ENCODE measurements at regions of chr6 and their contacts with region 1.

Region 1: DNA sequence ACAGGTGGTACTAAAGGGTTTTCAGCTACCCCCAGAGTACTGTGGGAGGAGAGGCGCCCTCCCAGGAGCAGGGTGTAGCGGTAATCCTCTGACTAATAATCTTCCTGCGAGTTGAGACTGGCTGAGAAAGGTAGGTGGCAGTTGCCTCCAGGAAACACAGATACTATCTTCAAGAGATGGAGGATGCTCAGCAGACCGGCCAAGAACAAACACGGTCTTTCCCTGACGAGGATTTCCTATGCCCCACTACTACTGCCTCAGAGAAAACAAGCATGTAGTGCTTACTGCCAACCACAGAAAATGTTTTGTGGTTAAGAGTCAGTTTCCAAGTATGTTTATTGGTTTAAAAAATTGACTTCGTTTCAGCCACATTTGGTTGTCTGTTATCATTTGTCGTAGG is 26.8 kb downstream of the C6orf89 start:
- DNase-seq: peak; percentile 74
- ATAC-seq: peak; percentile 87
- H3K4me3 Mint-ChIP-seq: peak overlapping the region; percentile 37
- H3K27ac Mint-ChIP-seq: peak overlapping the region; percentile 83
- H3K4me1 Mint-ChIP-seq: peaks cover 44% of the 10 kb centered on the region
- H3K27me3 Mint-ChIP-seq: no peaks in the 10 kb centered on the region

Region 2: DNA sequence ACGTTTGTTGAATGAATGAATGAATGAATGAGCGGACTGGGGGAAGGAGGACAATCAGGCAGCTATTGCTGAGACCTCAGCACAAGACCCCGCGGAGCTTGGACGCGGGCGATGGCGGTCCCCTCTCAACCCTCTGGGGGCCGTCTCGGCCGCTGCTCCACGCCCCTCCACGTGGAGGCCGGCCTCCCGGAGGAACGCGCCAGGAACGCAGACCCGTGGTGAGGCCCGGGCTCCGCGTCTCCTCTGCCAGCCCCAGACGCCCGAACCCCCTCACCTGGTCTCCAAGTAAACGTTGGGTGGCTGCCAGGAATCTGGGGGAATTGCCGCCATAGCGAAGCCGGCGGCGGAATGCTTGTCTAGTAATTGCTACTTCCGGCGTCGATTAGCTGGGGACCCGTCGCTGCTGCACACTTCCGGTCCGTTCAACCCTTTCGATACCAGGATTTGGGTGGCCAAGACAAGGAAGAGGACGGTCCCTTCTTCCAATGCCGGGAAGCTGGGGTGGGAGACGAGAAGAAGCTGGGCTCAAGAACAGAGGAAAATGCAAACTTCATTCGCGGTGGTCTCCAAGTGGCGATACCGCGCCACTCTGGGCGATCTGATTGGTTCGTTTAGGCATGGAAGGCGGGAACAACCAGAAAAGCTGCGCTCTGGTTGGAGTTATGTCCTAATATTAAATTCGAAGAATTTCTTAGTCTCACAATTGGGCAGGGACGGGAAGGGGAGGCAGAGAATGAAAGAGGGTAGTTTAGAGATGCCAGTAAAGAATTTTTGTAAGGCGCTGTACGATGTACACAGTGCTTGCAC is 37.9 kb before region 1 on chr6 and contains the start of gene PPIL1:
- CTCF ChIA-PET with region 1: no interaction called
- POLR2A ChIA-PET with region 1: no interaction called
- intact Hi-C with region 1: loop called (anchors 1 to 5 kb)
- DNase-seq: peak; percentile 90
- ATAC-seq: peak; percentile 80
- H3K4me3 Mint-ChIP-seq: peak within 1 kb of the TSS; percentile 98
- H3K27ac Mint-ChIP-seq: peak within 1 kb of the TSS; percentile 99
- H3K4me1 Mint-ChIP-seq: peaks cover 45% of the 10 kb centered on the region
- H3K27me3 Mint-ChIP-seq: peaks cover 7% of the 10 kb centered on the region
- total RNA-seq, gene PPIL1: 45.9 to 46.0 TPM

Region 3: DNA sequence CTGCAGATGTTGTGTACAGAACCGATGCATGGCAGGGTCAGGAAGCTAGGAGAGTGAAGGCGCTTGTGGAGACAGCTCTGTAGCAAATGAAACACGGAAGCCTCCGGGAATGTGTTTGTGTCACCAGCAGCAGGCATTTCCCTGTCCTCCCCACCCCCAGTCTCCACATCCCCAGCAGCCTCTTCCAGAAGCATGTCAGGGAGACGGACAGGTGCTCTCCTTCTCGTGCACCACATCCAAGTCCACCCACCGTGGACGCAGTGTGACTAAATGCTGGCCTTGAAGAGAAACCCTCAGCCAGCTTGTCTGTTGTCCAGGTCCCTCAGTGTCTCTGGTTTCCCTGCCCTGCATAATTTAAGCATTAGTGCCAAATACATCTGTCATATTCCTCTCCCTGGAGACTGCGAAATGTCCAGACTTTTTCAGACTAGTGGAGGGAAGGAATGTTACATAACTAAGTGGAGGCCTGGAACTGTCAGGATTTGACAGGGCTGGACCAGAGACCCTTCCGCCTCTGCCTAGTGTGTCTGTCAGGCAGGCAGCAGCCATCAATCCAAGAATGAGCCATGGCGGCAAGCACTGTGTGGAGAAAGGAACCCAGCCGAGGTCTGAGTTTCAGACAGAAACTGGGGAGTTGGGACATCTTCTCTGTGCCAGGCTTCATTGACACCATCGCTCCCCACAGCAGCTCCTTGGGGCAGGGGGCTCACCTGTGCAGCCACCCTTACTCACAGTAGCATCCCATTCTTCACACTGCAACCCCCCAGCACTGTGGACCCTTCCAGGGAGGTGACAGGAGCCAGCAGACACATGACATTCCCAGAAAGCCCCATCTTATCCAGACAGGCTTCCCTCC is 15.3 kb after region 1 on chr6:
- CTCF ChIA-PET with region 1: interaction called, 5 read pairs
- POLR2A ChIA-PET with region 1: no interaction called
- intact Hi-C with region 1: loop called in 1 of 2 experiments (anchors 1 kb)
- DNase-seq: no peak
- ATAC-seq: no peak
- H3K4me3 Mint-ChIP-seq: no peak overlapping the region
- H3K27ac Mint-ChIP-seq: no peak overlapping the region
- H3K4me1 Mint-ChIP-seq: peaks cover 22% of the 10 kb centered on the region
- H3K27me3 Mint-ChIP-seq: no peaks in the 10 kb centered on the region

Region 4: DNA sequence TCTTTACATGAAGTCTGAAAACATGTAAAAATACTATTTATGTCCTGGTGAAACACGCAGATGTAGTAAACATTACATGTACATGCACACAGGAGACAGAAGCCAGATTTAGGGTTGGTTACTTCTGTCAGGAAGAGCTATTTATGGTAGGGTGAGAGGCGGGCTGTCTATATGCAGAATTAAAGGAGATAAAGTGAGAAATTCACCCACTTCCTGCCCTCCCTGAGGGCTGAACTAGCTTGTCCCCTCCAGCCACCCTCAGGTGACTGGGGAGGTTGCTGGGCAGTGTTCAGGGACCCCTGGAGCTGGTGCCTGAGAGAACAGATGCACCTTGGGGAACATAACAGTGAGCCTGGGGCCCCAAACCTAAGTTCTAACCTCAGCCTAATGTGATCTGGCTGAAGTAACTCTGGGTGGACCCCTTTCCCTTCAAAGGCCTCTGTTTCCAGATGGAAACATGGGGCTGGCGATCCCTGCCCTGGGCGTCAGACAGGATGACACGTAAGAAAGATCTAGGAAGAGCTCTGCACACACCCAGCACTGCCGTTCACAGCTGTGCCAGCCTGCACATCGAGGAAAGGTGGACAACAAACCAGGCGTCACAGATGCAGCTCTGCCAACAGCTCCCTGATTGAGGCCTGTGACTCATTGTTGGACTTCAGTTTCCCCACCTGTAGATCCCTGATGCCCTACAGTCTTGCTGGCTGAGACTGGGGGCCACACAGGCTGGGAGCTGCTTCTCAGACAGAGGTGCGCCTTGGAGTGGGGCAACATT is 43.3 kb after region 1 on chr6:
- CTCF ChIA-PET with region 1: interaction called, 10 read pairs
- POLR2A ChIA-PET with region 1: no interaction called
- intact Hi-C with region 1: loop called in 1 of 2 experiments (anchors 1 kb)
- DNase-seq: peak; percentile 24
- ATAC-seq: peak; percentile 43
- H3K4me3 Mint-ChIP-seq: peak overlapping the region; percentile 51
- H3K27ac Mint-ChIP-seq: peak overlapping the region; percentile 66
- H3K4me1 Mint-ChIP-seq: peaks cover 45% of the 10 kb centered on the region
- H3K27me3 Mint-ChIP-seq: no peaks in the 10 kb centered on the region

Measured in activated CD4-positive, alpha-beta T cell treated with anti-CD3 and anti-CD28 coated beads for 36 hours (primary cell).